PC-3 (cell line): ENCODE measurements at regions of chr7 and their contacts with region 1.

Region 1: DNA sequence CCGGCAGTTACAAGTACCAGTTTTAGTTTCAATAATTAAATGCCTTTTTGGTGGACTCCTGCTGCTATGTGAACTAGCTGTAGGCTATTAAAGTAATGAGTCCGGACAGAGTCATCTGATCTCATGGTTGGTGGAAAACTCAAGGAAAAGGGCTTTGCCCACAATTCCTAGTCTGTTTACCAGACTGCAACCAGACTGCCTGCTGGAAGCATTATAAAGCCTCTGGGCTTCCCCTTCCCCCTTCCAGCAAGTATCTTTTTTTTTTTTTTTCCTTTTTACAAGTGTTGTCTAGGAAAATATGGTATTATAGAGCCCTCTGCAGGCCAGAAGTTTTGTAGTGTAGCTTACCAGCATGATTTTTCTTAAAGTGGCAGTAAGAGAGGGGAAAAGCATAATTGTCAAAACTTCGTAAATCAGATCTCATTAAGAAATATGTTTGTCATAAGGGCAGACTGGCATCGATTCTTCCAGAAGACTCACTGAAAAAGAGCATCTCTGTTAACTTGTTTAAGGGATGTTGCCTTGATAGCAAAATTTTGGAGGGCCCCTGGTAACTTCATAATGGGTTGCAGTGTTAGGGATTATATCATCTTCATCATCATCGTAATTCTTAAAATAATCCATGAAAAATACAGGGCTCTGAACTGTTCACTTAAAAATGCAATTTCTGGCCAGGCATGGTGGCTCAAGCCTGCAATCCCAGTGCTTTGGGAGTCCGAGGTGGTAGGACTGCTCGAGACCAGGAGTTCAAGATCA is 181.3 kb downstream of the TAX1BP1 start:
- DNase-seq: peak; percentile 90
- ATAC-seq: peak; percentile 87
- H3K4me3 ChIP-seq: peak overlapping the region; percentile 57
- H3K27ac ChIP-seq: peak overlapping the region; percentile 66
- H3K4me1 ChIP-seq: peaks cover 45% of the 10 kb centered on the region
- H3K27me3 ChIP-seq: no peaks in the 10 kb centered on the region
- CTCF ChIP-seq: peak; percentile 82

Region 2: GRCh38 chr7:27204851-27205337 is 716.4 kb before region 1 on chr7:
- CTCF ChIA-PET with region 1: no interaction called
- POLR2A ChIA-PET with region 1: interaction called, 14 read pairs
- intact Hi-C with region 1: no loop called
- DNase-seq: peak; percentile 54
- ATAC-seq: peak; percentile 4
- H3K4me3 ChIP-seq: peak overlapping the region; percentile 75
- H3K27ac ChIP-seq: peak overlapping the region; percentile 92
- H3K4me1 ChIP-seq: peaks cover 50% of the 10 kb centered on the region
- H3K27me3 ChIP-seq: no peaks in the 10 kb centered on the region
- CTCF ChIP-seq: no peak

Region 3: DNA sequence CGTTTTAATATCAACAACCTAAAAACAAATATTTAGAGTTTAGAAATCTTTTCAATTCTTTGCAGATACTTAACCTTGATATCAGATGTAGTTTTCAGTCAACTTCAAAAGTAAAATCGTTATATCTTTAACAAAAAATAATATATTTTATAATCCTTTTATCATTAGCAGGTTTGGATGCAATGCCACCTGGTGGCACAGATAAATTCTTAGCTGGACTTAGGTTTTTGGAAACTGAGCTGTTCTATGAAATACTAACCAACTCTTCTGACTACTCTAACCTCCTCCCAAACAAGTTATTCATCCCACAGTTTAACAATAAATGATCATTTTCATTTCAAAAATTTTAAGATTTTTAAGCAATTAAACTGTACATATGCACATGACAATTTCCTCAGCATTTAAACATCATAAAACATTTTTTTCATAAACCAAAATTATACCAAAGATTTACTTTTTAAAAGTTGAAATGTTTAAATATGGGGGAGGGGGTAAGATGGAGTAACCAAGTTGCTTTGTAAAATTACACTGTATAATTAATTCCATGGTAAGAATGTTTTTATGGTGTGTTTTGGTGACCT is 315.5 kb before region 1 on chr7:
- CTCF ChIA-PET with region 1: interaction called, 4 read pairs
- POLR2A ChIA-PET with region 1: no interaction called
- intact Hi-C with region 1: loop called (anchors 1 kb)
- DNase-seq: peak; percentile 75
- ATAC-seq: peak; percentile 68
- H3K4me3 ChIP-seq: peak overlapping the region; percentile 50
- H3K27ac ChIP-seq: peak overlapping the region; percentile 91
- H3K4me1 ChIP-seq: peaks cover 30% of the 10 kb centered on the region
- H3K27me3 ChIP-seq: no peaks in the 10 kb centered on the region
- CTCF ChIP-seq: peak; percentile 62

Region 4: GRCh38 chr7:27689591-27690164 is 231.6 kb before region 1 on chr7:
- CTCF ChIA-PET with region 1: interaction called, 6 read pairs
- POLR2A ChIA-PET with region 1: no interaction called
- intact Hi-C with region 1: loop called (anchors 1 kb)
- DNase-seq: peak; percentile 67
- ATAC-seq: peak; percentile 93
- H3K4me3 ChIP-seq: no peak overlapping the region
- H3K27ac ChIP-seq: no peak overlapping the region
- H3K4me1 ChIP-seq: peaks cover 18% of the 10 kb centered on the region
- H3K27me3 ChIP-seq: no peaks in the 10 kb centered on the region
- CTCF ChIP-seq: peak; percentile 89

Region 5: GRCh38 chr7:27784393-27785053 is 136.7 kb before region 1 on chr7:
- CTCF ChIA-PET with region 1: interaction called, 8 read pairs
- POLR2A ChIA-PET with region 1: no interaction called
- intact Hi-C with region 1: loop called (anchors 1 kb)
- DNase-seq: peak; percentile 96
- ATAC-seq: peak; percentile 97
- H3K4me3 ChIP-seq: no peak overlapping the region
- H3K27ac ChIP-seq: no peak overlapping the region
- H3K4me1 ChIP-seq: peaks cover 24% of the 10 kb centered on the region
- H3K27me3 ChIP-seq: no peaks in the 10 kb centered on the region
- CTCF ChIP-seq: peak; percentile 75

Region 6: GRCh38 chr7:28062197-28062991 is 141.1 kb after region 1 on chr7:
- CTCF ChIA-PET with region 1: interaction called, 10 read pairs
- POLR2A ChIA-PET with region 1: no interaction called
- intact Hi-C with region 1: no loop called
- DNase-seq: peak; percentile 73
- ATAC-seq: peak; percentile 89
- H3K4me3 ChIP-seq: peak overlapping the region; percentile 9; the same call in 1 of the 2 replicates
- H3K27ac ChIP-seq: peak overlapping the region; percentile 63
- H3K4me1 ChIP-seq: peaks cover 29% of the 10 kb centered on the region
- H3K27me3 ChIP-seq: no peaks in the 10 kb centered on the region
- CTCF ChIP-seq: peak; percentile 85